HEK293 (cell line): ENCODE measurements at regions of chr10 and their contacts with region 1.

Region 1: DNA sequence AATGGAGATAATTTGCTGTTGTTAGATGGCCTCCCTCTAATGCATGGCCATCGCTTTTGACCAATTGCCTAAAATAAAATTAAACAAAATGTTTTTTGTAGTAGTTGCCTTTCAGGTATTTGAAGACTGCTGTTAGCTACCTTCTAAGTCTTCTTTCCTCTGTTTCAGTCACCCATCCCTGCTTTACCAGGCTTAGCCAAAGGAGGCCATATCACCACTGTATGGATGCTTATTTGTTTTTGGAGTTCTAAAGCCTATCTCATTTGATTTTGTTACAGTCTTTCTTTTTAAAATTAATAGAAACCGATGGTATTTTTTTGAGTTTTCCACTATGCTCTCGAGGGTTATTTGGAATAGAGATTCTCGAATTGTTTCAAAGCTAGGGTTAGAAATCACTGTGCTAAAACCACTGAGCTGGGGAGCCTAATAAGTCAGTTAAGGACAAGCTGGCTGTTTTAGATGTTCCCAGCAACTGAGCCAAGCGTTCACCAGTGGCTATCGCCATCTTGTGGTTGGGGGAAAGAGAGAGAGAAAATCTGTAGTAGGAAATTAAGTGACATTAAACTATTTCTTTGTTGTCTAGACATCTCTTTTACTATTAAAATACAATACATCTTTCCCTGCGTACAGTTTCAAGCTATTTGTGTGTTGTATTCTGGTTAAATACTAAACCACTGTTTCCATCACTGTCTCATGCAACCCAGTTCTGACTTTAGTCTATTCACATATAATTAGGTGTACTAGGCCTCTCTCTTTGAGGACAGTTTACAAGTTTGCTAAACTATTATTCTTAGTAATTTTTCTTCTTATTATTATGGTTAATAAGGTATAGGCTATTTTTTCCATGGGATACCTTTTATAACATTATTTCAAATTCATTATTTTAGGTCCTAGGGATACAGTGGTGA is 52.2 kb downstream of the GPR158 start:
- H3K4me3 ChIP-seq: no peak overlapping the region
- H3K27ac ChIP-seq: no peak overlapping the region
- H3K4me1 ChIP-seq: no peaks in the 10 kb centered on the region
- CTCF ChIP-seq: no peak

Region 2: GRCh38 chr10:24882047-24882698 is 344.9 kb before region 1 on chr10:
- CTCF ChIA-PET with region 1: no interaction called
- POLR2A ChIA-PET with region 1: no interaction called
- H3K4me3 ChIP-seq: no peak overlapping the region
- H3K27ac ChIP-seq: no peak overlapping the region
- H3K4me1 ChIP-seq: no peaks in the 10 kb centered on the region
- CTCF ChIP-seq: no peak

Region 3: GRCh38 chr10:25113191-25114035 is 113.6 kb before region 1 on chr10:
- CTCF ChIA-PET with region 1: interaction called, 26 read pairs
- POLR2A ChIA-PET with region 1: no interaction called
- H3K4me3 ChIP-seq: no peak overlapping the region
- H3K27ac ChIP-seq: no peak overlapping the region
- H3K4me1 ChIP-seq: no peaks in the 10 kb centered on the region
- CTCF ChIP-seq: peak; percentile 64

Region 4: DNA sequence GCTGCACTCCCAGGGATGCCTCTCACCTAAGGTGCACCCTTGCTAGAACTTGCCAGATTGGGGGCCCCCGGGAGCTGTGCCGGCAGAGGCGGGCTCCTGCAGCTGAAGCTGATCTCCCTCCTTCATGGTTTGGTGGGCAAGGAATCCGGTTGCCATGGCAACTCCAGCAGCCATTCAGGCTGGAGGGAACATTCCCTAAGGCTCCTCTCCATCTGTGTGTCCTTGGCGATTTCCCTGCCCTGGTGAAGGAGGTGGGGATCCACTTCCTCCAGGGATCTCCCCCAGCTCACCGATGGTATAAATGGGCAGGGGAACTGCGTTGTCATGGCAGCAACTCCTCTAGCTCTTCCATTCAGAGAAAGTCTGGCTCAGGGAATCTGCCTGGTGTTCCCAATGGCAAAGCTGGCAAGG is 101.8 kb before region 1 on chr10:
- CTCF ChIA-PET with region 1: no interaction called
- POLR2A ChIA-PET with region 1: no interaction called
- H3K4me3 ChIP-seq: no peak overlapping the region
- H3K27ac ChIP-seq: no peak overlapping the region
- H3K4me1 ChIP-seq: no peaks in the 10 kb centered on the region
- CTCF ChIP-seq: no peak

Region 5: GRCh38 chr10:25210265-25210664 is 16.8 kb before region 1 on chr10:
- CTCF ChIA-PET with region 1: interaction called, 10 read pairs
- POLR2A ChIA-PET with region 1: no interaction called
- H3K4me3 ChIP-seq: no peak overlapping the region
- H3K27ac ChIP-seq: no peak overlapping the region
- H3K4me1 ChIP-seq: no peaks in the 10 kb centered on the region
- CTCF ChIP-seq: no peak

Region 6: GRCh38 chr10:25388188-25388861 is 161.3 kb after region 1 on chr10:
- CTCF ChIA-PET with region 1: no interaction called
- POLR2A ChIA-PET with region 1: no interaction called
- H3K4me3 ChIP-seq: no peak overlapping the region
- H3K27ac ChIP-seq: no peak overlapping the region
- H3K4me1 ChIP-seq: no peaks in the 10 kb centered on the region
- CTCF ChIP-seq: no peak